Left cardiac atrium (tissue), 4 donors: ENCODE measurements at regions of chr20 and their contacts with region 1.

Region 1: GRCh38 chr20:31661625-31662371 is 24.1 kb downstream of the COX4I2 start:
- DNase-seq: peak; percentile 87
- ATAC-seq: peak; percentile 88 to 90

Region 2: GRCh38 chr20:31835977-31836852 is 174.4 kb after region 1 on chr20:
- intact Hi-C with region 1: loop called in 1 of 2 experiments (anchors 10 kb)
- DNase-seq: peak; percentile 92
- ATAC-seq: peak; percentile 82 to 84